Right lobe of liver (tissue), 6 donors: ENCODE measurements at regions of chr14 and their contacts with region 1.

Region 1: DNA sequence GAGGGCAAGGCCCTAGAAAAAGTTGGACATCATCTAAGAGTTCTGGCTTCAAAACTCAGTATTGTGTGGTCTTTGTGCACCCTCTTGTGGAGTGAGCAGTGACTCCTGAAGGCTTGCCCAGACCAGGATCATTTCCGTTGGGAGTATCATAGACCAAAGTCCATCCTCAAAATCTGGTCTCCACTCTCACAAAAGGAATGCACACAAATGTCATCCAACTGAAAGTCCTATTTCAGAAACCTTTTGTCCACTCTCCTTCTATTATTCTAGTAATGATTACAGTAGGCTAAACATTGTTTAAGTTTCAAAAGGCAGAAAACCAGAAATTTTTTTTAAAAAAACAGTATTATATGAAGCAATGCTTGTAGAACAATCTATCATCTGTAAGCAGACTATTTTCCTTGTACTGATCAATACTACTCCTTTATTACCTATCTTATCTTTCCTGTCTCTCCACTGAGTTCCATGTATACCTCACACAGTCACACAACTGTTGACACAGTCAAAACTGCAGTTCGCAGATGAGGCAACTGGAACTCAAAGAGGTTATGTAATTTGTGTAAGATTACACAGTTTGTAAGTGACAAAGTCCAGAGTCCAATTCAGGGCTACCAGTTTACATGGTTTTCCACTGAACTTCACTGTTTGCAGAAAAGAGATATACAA is 41.4 kb downstream of the COX16 start:
- DNase-seq: peak in 1 of 3 donors; percentile 75
- ATAC-seq: peak; percentile 92 to 97 (median 94)
- H3K4me3 ChIP-seq: peak overlapping the region in 2 of 3 donors; percentile 17 to 27
- H3K27ac ChIP-seq: peak overlapping the region; percentile 37 to 92 (median 80)
- H3K4me1 ChIP-seq: peaks cover 0 to 16% (median 5%) of the 10 kb centered on the region in 4 donors
- H3K27me3 ChIP-seq: no peaks in the 10 kb centered on the region
- CTCF ChIP-seq: peak; percentile 68 to 86 (median 78)
- POLR2A ChIP-seq: no peak

Region 2: DNA sequence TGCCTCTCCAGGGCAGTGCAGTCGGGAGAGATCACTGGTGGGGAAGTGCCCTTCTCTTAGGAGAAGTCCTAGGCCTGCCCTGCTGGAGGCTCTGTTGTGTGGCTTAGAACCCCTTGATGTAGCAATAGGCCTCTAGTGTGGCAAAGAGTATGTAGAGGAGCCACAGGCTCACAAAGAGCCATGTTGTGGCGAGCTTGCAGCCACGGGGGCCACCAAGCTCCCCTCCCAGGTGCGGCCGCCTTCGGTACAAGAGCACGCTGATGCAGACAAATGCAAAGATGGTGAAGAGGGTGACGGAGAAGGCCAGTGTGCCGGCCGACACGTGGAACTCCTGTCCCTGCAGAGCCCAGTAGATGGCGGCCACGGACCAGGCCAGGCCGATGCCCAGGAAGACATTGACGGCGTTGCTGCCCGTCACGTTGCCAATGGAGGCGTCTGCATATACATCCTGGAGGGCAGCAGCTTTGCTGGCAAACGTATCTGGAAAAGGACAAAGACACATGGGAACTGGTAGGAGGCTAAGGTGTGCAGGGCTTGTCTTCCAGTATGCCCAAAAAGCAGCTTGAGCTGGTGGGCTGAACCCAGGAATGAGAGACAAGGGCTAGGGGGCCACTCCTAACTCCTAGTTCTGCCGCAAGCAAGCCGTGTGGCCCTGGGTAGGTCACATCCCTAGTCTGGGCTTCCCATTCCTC is 272.1 kb before region 1 on chr14:
- intact Hi-C with region 1: loop called in 1 of 2 experiments (anchors 10 kb)
- DNase-seq: peak; percentile 81 to 85 (median 84)
- ATAC-seq: peak; percentile 98 to 99 (median 99)
- H3K4me3 ChIP-seq: no peak overlapping the region
- H3K27ac ChIP-seq: no peak overlapping the region
- H3K4me1 ChIP-seq: peaks cover 0 to 11% (median 0%) of the 10 kb centered on the region in 4 donors
- H3K27me3 ChIP-seq: no peaks in the 10 kb centered on the region
- CTCF ChIP-seq: peak; percentile 83 to 92 (median 88)
- POLR2A ChIP-seq: no peak

Region 3: DNA sequence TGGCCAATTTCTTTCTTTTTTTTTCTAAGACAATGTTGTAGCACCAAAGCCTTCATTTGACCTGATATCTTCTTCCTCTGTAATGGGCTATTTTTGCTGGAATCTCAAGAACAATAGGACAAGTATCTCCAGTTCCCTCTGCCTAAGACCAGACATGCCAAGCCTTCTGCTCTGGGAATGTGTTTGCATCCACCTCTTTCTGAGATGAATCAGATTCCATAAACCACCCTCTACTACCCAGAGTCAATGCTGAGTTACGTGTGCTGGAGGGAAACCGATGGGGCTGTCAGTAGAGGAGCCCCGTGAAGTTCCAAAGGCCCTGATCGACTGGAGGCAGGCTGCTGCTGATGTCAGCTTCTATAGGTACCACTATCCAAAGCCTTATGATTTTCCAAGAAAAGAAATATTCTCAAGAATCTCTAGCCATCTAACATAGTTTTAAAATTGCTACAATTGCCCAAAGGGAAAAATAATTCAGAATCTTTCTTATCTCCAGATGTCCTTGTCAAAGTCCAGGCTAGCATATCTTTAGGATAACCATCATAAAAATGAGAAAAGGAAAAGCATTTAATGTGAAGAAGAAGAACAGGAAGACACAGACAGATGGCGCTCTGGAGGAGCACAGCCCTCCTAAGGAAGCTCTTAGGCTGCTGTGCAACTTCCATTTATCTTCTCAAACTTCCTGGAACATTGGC is 231.3 kb before region 1 on chr14:
- intact Hi-C with region 1: no loop called
- DNase-seq: peak in 2 of 3 donors; percentile 46 to 48
- ATAC-seq: peak; percentile 78 to 95 (median 81)
- H3K4me3 ChIP-seq: no peak overlapping the region
- H3K27ac ChIP-seq: no peak overlapping the region
- H3K4me1 ChIP-seq: no peaks in the 10 kb centered on the region
- H3K27me3 ChIP-seq: no peaks in the 10 kb centered on the region
- CTCF ChIP-seq: peak; percentile 55 to 69 (median 66)
- POLR2A ChIP-seq: no peak

Region 4: GRCh38 chr14:70237710-70238109 is 80.4 kb before region 1 on chr14:
- intact Hi-C with region 1: no loop called
- DNase-seq: peak in 1 of 3 donors; percentile 40
- ATAC-seq: no peak
- H3K4me3 ChIP-seq: no peak overlapping the region
- H3K27ac ChIP-seq: no peak overlapping the region
- H3K4me1 ChIP-seq: no peaks in the 10 kb centered on the region
- H3K27me3 ChIP-seq: no peaks in the 10 kb centered on the region
- CTCF ChIP-seq: no peak
- POLR2A ChIP-seq: no peak